ENCODE measurements at regions of chr10 and their contacts with region 1.

Region 1: DNA sequence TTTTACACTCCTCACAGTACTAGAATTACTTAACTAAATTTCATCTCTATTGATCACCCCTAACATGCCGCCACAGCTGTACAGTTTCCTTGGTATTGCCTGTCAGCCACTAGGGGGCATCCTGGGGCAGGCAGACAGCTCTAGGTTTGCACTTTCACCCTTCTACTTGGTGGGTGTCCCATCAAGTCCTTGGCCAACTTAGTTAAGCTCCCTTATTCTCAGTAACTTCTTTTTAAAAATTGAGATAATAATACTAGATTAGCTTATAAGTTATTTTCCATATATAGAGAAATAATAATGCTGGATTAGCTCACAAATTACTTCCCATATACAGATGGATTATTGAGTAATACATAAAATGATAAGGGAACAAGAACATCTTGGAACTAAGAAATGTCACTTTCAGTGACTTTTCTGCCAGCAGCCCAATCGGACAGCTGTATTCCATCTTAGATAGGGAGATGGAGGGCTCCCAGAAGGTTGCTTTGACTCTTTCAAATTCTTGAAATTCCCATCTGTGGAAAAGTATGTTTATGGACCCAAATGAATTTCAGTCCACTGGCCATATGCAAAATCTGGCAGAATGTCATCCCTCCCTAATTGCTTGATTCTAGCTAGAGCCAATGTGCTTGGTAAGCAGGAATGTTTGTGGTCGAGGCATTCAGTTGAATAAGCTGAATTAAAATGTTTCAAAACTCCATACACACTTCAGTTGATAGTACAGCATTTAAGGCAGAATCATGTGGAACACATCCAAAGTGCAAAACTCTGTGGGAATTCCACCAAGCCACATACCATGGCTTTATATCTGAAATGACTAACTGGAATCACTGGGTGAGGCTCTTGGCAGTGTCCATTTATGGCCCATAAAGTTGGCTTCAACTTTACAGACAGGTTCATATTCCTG is 309.7 kb downstream of the CSTF2T start:
- DNase-seq: peak; percentile 75
- ATAC-seq: peak; percentile 92
- H3K4me3 Mint-ChIP-seq: no peak overlapping the region
- H3K27ac Mint-ChIP-seq: no peak overlapping the region
- H3K4me1 Mint-ChIP-seq: peaks cover 2% of the 10 kb centered on the region; the same call in 1 of the 2 replicates
- H3K27me3 Mint-ChIP-seq: no peaks in the 10 kb centered on the region
- CTCF ChIP-seq: peak; percentile 92

Region 2: GRCh38 chr10:51023636-51024035 is 366.0 kb before region 1 on chr10:
- CTCF ChIA-PET with region 1: no interaction called
- POLR2A ChIA-PET with region 1: no interaction called
- DNase-seq: no peak
- ATAC-seq: no peak
- H3K4me3 Mint-ChIP-seq: no peak overlapping the region
- H3K27ac Mint-ChIP-seq: no peak overlapping the region
- H3K4me1 Mint-ChIP-seq: peaks cover 8% of the 10 kb centered on the region
- H3K27me3 Mint-ChIP-seq: no peaks in the 10 kb centered on the region
- CTCF ChIP-seq: no peak

Region 3: GRCh38 chr10:51145375-51145774 is 244.3 kb before region 1 on chr10:
- CTCF ChIA-PET with region 1: no interaction called
- POLR2A ChIA-PET with region 1: no interaction called
- DNase-seq: no peak
- ATAC-seq: no peak
- H3K4me3 Mint-ChIP-seq: no peak overlapping the region
- H3K27ac Mint-ChIP-seq: peak overlapping the region; percentile 6; the same call in 1 of the 2 replicates
- H3K4me1 Mint-ChIP-seq: peaks cover 5% of the 10 kb centered on the region
- H3K27me3 Mint-ChIP-seq: no peaks in the 10 kb centered on the region
- CTCF ChIP-seq: no peak

Region 4: DNA sequence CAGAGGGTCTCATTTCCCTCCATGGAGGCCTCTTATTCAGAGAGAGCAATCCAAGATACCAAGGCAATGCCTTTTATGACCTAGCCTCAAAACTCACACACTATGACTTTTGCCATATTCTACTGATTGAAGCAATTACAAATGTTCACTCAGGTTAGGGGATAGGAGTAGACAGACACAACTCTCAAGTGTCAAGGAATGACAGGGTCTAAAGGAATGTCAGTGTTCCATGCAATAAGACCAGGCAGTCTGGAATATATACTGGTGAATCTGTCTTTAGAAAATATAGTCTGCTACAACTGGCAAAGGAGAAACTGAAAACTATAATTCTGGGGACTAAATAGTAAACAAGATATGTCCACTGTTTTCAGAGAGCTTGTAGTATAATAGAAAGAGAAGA is 31.4 kb before region 1 on chr10:
- CTCF ChIA-PET with region 1: no interaction called
- POLR2A ChIA-PET with region 1: no interaction called
- DNase-seq: no peak
- ATAC-seq: no peak
- H3K4me3 Mint-ChIP-seq: no peak overlapping the region
- H3K27ac Mint-ChIP-seq: no peak overlapping the region
- H3K4me1 Mint-ChIP-seq: peaks cover 1% of the 10 kb centered on the region
- H3K27me3 Mint-ChIP-seq: no peaks in the 10 kb centered on the region
- CTCF ChIP-seq: no peak

Region 5: DNA sequence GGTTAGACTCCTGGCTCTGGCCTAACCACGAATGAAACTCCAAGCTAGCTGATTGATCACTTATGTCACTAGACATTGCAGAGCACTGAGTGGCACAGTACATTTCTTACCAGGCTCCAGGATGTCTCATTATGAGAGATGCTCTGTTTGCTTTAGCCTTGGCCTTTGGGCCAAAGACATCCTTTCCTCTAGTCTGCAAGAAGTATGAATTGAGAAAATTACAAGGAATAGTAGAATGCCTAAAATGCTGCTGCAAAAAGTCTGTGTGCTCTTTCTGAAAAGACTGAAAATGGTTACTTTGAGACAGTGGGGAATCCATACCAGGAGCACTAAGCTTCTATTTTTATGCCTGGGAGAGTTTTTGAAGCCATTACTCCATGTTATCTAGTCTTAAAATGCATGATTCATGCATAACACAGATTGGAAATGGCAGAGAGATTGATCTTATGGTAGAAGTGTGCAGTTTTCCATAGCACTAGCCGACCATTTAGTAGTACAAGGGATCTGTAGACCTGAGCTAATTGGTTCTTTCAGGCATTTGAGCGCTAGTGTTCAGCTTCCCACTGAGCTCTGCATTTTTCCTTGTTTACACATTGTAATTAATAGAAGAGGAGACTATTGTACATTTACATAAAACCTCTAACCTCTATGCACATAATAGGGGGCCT is 11.6 kb before region 1 on chr10:
- CTCF ChIA-PET with region 1: interaction called, 11 read pairs
- POLR2A ChIA-PET with region 1: no interaction called
- DNase-seq: no peak
- ATAC-seq: no peak
- H3K4me3 Mint-ChIP-seq: no peak overlapping the region
- H3K27ac Mint-ChIP-seq: no peak overlapping the region
- H3K4me1 Mint-ChIP-seq: peaks cover 12% of the 10 kb centered on the region
- H3K27me3 Mint-ChIP-seq: no peaks in the 10 kb centered on the region
- CTCF ChIP-seq: no peak

Region 6: GRCh38 chr10:51422311-51423120 is 32.8 kb after region 1 on chr10:
- CTCF ChIA-PET with region 1: interaction called, 10 read pairs
- POLR2A ChIA-PET with region 1: no interaction called
- DNase-seq: peak; percentile 57
- ATAC-seq: peak; percentile 92
- H3K4me3 Mint-ChIP-seq: no peak overlapping the region
- H3K27ac Mint-ChIP-seq: no peak overlapping the region
- H3K4me1 Mint-ChIP-seq: peaks cover 15% of the 10 kb centered on the region
- H3K27me3 Mint-ChIP-seq: no peaks in the 10 kb centered on the region
- CTCF ChIP-seq: peak; percentile 67